Dorsolateral prefrontal cortex (tissue), 120 donors: ENCODE measurements at regions of chr10 and their contacts with region 1.

Region 1: DNA sequence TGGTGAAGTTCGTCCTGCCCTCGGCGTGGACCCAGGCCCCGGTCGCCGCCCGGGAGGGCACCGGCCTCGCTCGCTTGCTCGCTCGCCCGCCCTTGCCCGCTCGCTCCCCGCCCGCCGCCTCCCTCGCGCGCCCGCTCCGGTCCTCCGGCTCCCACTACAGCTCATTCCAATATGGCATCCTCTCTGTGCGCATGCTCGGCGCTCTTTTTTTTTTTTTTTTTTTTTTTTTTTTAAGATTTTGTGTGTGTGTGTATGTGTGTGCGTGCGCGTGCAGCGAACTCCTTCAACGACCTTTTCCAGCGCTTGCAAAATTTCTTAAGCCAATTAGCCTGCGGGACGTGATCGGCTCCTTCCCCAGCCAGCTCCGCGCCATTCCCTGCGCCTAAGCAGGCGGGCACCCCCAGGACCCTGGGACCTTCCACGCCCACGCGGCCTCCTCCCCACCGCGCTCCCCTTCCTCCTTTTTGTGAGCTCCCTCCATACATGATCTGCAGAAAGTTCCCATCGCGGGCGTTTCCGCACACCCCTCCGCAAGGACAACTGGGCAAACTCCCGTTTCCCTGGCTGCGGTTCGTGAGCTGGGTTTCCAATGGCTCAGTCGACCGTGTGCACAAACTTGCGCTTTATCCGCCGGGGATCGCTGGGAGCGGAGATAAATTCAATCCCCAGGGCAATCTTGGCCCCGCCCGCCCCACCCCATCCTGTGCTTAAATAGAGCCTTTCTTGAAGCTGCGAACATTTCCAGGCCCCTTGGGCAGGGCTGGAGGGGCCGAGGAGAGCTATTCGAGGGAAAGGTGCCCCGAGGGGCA is at the start of gene SFMBT2:
- DNase-seq: peak; percentile 40 to 76 (median 65)
- H3K4me3 ChIP-seq: peak within 1 kb of the TSS; percentile 61 to 92 (median 79)
- H3K27ac ChIP-seq: peak within 1 kb of the TSS; percentile 41 to 93 (median 84)
- H3K27me3 ChIP-seq: peaks cover 0 to 18% (median 0%) of the 10 kb centered on the region in 45 donors
- CTCF ChIP-seq: peak in 34 of 56 donors; percentile 4 to 58 (median 30)
- total RNA-seq, gene SFMBT2: 14.7 to 38.1 (median 24.3) TPM

Region 2: DNA sequence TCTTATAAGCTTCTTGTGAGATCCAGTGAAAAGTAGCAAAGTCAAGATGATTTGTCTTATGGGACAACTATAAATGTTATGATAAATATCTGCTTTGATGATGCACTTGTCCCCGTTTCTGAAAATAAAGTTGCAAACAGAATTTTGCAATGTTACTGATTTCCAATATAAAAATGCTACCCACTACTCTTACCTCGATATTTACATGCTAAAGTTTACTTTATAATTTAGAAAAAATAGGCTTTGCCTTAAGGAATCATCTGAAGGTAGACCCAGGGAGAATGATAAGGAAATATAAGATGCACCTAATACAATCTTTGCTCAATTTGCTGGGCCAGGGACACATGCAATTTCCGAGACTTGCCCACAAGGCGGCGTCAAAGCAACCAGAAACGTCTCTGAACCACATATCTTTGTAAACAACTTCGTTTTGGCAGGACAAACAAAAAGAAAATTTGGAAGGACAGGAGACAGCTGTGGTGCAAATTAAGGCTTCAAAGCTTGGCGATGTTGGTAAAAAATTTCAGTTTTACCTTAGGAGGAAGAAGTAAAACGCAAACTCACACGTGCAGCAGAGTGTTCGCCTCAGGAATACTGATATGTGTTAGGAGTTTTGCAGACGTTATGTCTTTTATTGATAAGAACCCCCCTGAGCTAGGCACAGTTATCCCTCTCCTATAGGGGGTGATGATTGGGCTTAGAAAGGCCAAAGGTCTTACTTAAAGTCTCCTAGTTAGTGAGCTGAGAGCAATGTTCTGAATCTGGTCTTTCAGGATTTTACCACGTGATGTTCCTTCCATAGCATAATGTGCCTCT is 965.4 kb before region 1 on chr10:
- intact Hi-C with region 1: loop called in 1 of 2 experiments (anchors 10 kb)
- DNase-seq: peak; percentile 13 to 89 (median 69)
- H3K4me3 ChIP-seq: peak overlapping the region in 58 of 59 donors; percentile 7 to 62 (median 36)
- H3K27ac ChIP-seq: peak overlapping the region in 54 of 59 donors; percentile 10 to 93 (median 80)
- H3K27me3 ChIP-seq: no peaks in the 10 kb centered on the region
- CTCF ChIP-seq: peak; percentile 33 to 87 (median 75)

Region 3: DNA sequence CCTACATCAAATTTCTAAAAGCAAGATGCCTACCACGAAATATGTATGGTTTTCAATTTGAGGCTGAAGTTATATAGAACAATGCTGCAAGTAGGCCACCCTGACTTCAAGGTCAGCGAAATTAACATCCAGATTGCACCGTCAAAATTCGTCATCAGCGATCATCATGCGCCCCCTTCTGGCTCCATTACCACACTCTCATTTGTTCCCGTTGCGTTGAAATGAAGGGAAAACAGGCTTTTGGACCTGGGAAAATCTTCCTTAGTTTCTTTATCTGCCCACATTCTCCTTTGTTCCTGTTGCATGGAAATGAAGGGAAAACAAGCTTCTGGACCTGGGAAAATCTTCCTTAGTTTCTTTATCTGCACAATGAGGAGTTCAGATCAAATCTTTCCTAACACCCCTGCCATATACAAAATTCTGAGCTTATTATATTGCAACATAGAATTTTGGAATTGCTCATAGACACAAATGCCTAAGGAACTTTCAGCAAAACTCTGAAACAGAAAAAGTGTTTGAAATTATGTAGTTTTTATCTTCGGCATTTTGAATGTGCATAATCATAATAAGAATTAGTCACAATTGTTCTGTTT is 732.8 kb before region 1 on chr10:
- intact Hi-C with region 1: loop called (anchors 5 kb)
- DNase-seq: peak in 7 of 10 donors; percentile 8 to 56 (median 40)
- H3K4me3 ChIP-seq: peak overlapping the region in 1 of 59 donors; percentile 10
- H3K27ac ChIP-seq: no peak overlapping the region
- H3K27me3 ChIP-seq: peaks cover 0 to 5% (median 0%) of the 10 kb centered on the region in 45 donors
- CTCF ChIP-seq: peak; percentile 37 to 82 (median 66)

Region 4: DNA sequence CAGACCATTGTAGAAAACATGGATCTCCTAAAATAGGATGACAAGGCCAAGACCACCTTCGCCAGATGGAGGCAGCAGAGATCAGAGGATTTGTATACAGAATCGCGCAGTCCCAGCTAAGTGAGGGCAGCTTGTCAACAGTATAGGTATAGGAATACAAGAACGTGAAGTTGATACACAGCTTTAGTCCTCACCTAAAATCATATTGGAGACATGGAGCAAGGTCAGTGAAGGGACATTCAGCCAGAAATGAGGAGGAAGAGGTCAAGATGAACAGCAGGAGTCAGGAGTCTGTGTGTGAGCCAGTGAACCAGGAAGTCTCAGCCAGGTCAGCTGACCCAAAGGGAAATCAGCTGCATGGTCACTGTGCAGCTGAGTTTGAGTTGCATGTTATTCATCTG is 567.6 kb before region 1 on chr10:
- intact Hi-C with region 1: loop called in 1 of 2 experiments (anchors 2 kb)
- DNase-seq: peak in 8 of 10 donors; percentile 35 to 80 (median 58)
- H3K4me3 ChIP-seq: peak overlapping the region in 8 of 59 donors; percentile 7 to 41 (median 24)
- H3K27ac ChIP-seq: peak overlapping the region in 35 of 59 donors; percentile 2 to 82 (median 50)
- H3K27me3 ChIP-seq: no peaks in the 10 kb centered on the region
- CTCF ChIP-seq: peak in 53 of 56 donors; percentile 16 to 77 (median 49)

Region 5: GRCh38 chr10:7111561-7111960 is 299.5 kb before region 1 on chr10:
- intact Hi-C with region 1: loop called in 1 of 2 experiments (anchors 10 kb)
- DNase-seq: no peak
- H3K4me3 ChIP-seq: no peak overlapping the region
- H3K27ac ChIP-seq: no peak overlapping the region
- H3K27me3 ChIP-seq: peaks cover 0 to 7% (median 0%) of the 10 kb centered on the region in 45 donors
- CTCF ChIP-seq: no peak

Region 6: GRCh38 chr10:7337431-7338171 is 73.5 kb before region 1 on chr10:
- intact Hi-C with region 1: loop called (anchors 5 kb)
- DNase-seq: no peak
- H3K4me3 ChIP-seq: peak overlapping the region in 1 of 59 donors; percentile 3
- H3K27ac ChIP-seq: peak overlapping the region in 42 of 59 donors; percentile 4 to 84 (median 48)
- H3K27me3 ChIP-seq: no peaks in the 10 kb centered on the region
- CTCF ChIP-seq: no peak